ENCODE measurements at regions of chr2 and their contacts with region 1.

Region 1: DNA sequence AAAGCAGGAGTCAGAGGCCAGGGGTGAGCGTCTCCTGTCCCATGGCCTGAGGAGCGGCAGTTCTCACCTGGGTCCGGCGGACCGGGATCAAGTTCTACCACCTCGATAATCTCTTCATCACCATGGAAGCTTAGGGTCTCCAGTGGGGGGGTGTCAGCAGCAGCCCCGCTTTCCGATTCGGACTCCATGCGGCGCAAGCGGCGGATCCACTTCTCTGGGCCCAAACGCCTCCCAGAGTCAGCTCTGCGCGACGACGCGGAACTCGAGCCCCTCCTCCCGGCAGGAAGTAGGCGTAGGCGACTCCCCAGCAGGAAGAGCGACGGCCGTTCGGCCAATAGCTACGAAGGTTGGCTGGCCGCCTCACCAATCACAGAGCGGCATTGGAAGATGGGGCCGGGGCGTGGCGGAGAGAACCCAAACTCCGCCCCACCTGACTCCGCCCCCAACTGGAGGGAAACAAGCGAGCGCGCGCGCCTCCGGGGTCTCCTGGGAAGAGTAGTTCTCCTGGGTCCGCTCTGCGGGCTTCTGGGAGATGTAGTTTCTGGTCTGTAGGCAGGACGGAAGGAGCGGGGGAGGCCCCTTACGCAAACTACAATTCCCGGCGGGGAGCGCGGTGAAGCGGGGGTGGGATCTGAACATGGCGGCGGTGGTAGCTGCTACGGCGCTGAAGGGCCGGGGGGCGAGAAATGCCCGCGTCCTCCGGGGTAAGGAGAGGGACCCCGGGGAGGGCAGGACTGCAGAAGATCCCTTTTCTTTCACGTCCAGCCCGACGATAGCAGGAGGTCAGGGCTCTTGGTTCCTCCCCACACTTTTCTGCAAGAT is at the starts of genes AAMP and PNKD:
- DNase-seq: peak; percentile 100
- ATAC-seq: peak; percentile 87
- H3K4me3 ChIP-seq: peak within 1 kb of the TSS; percentile 78 to 97 (median 96)
- H3K27ac ChIP-seq: peak within 1 kb of the TSS; percentile 80
- H3K4me1 ChIP-seq: peaks cover 58% of the 10 kb centered on the region
- H3K27me3 ChIP-seq: no peaks in the 10 kb centered on the region; a peak in 1 of 5 replicates
- CTCF ChIP-seq: peak; percentile 54
- EP300 ChIP-seq: 0 out of 4 replicates have a peak, but pooled peaks of 1 of the 2 experiments have one; percentile 47
- POLR2A ChIP-seq: peak; percentile 84 to 94
- RAD21 ChIP-seq: peak; percentile 40
- total RNA-seq, gene AAMP: 186 and 241 TPM in 2 replicates
- total RNA-seq, gene PNKD: 50.0 and 55.9 TPM in 2 replicates

Region 2: DNA sequence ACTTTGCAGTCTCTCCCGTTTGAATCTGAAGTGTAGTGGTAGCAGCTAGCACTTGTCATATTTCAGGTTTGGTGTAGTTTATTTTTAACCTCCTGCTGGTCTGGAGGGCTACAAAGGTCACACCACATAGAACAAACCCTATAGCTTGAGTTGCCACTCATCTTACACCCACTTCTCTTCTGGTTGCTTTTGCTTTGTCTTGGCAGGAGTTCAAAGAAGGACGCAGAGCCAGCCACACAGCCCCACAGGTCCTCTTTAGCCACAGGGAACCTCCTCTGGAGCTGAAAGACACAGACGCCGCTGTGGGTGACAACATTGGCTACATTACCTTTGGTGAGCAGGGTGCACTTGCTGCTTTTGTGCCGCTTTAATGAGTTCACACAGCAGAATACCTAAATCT is 24.9 kb before region 1 on chr2:
- CTCF ChIA-PET with region 1: no interaction called
- POLR2A ChIA-PET with region 1: interaction called, 10 read pairs
- in situ Hi-C with region 1: no loop called
- intact Hi-C with region 1: no loop called
- DNase-seq: peak; percentile 54
- ATAC-seq: peak; percentile 87
- H3K4me3 ChIP-seq: peak overlapping the region in 2 of 3 experiments; percentile 2 to 3; a peak in 2 of 6 replicates
- H3K27ac ChIP-seq: peak overlapping the region; percentile 40
- H3K4me1 ChIP-seq: peaks cover 31% of the 10 kb centered on the region
- H3K27me3 ChIP-seq: no peaks in the 10 kb centered on the region
- CTCF ChIP-seq: no peak
- EP300 ChIP-seq: no peak
- POLR2A ChIP-seq: no peak
- RAD21 ChIP-seq: no peak

Region 3: GRCh38 chr2:218292048-218293014 is 22.2 kb after region 1 on chr2 and contains the start of gene TMBIM1:
- CTCF ChIA-PET with region 1: interaction called, 13 read pairs
- POLR2A ChIA-PET with region 1: interaction called, 121 read pairs
- in situ Hi-C with region 1: no loop called
- intact Hi-C with region 1: loop called (anchors 1 kb)
- DNase-seq: peak; percentile 72
- ATAC-seq: peak; percentile 84
- H3K4me3 ChIP-seq: peak within 1 kb of the TSS; percentile 83 to 99 (median 95)
- H3K27ac ChIP-seq: peak within 1 kb of the TSS; percentile 88
- H3K4me1 ChIP-seq: peaks cover 88% of the 10 kb centered on the region
- H3K27me3 ChIP-seq: no peaks in the 10 kb centered on the region; a peak in 1 of 5 replicates
- CTCF ChIP-seq: peak; percentile 72
- EP300 ChIP-seq: peak; percentile 38 to 73; a peak in 3 of 4 replicates
- POLR2A ChIP-seq: peak; percentile 77 to 88
- RAD21 ChIP-seq: peak; percentile 96
- total RNA-seq, gene TMBIM1: 69.7 and 139 TPM in 2 replicates

Region 4: GRCh38 chr2:218345491-218346216 is 75.5 kb after region 1 on chr2:
- CTCF ChIA-PET with region 1: no interaction called
- POLR2A ChIA-PET with region 1: no interaction called
- in situ Hi-C with region 1: no loop called
- intact Hi-C with region 1: no loop called
- DNase-seq: no peak
- ATAC-seq: no peak; the same call in 2 of the 3 replicates
- H3K4me3 ChIP-seq: no peak overlapping the region
- H3K27ac ChIP-seq: no peak overlapping the region
- H3K4me1 ChIP-seq: peaks cover 7% of the 10 kb centered on the region; the same call in 1 of the 2 replicates
- H3K27me3 ChIP-seq: no peaks in the 10 kb centered on the region
- CTCF ChIP-seq: no peak
- EP300 ChIP-seq: no peak
- POLR2A ChIP-seq: no peak
- RAD21 ChIP-seq: no peak

Region 5: GRCh38 chr2:218395797-218396687 is 125.9 kb after region 1 on chr2:
- CTCF ChIA-PET with region 1: interaction called, 8 read pairs
- POLR2A ChIA-PET with region 1: interaction called, 16 read pairs
- in situ Hi-C with region 1: no loop called
- intact Hi-C with region 1: loop called (anchors 1 kb)
- DNase-seq: peak; percentile 94
- ATAC-seq: peak; percentile 25
- H3K4me3 ChIP-seq: peak overlapping the region; percentile 71 to 97 (median 85)
- H3K27ac ChIP-seq: peak overlapping the region; percentile 99
- H3K4me1 ChIP-seq: peaks cover 41% of the 10 kb centered on the region
- H3K27me3 ChIP-seq: no peaks in the 10 kb centered on the region; a peak in 1 of 5 replicates
- CTCF ChIP-seq: peak; percentile 94
- EP300 ChIP-seq: peak; percentile 19 to 78; a peak in 3 of 4 replicates
- POLR2A ChIP-seq: peak in 1 of 2 experiments; percentile 23; a peak in 1 of 4 replicates
- RAD21 ChIP-seq: peak; percentile 94

Region 6: DNA sequence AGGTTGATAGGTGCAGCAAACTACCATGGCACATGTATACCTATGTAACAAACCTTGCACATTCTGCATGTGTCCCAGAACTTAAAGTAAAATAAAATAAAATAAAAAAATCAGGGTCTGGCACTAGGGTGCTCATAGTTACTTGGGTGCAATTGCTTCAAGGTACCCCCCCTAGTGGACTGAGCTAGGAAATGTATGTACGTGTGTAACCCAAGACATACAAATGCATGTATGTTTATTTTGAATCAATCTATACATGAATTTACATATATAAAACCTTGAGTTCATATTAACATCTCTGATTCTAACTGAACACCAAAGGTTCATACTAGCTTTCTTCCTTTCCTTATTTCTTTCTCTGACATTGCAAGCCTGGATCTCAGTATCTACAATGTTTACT is 246.5 kb after region 1 on chr2:
- CTCF ChIA-PET with region 1: interaction called, 3 read pairs
- POLR2A ChIA-PET with region 1: no interaction called
- in situ Hi-C with region 1: no loop called
- intact Hi-C with region 1: loop called (anchors 1 kb)
- DNase-seq: peak; percentile 36
- ATAC-seq: peak; percentile 74
- H3K4me3 ChIP-seq: no peak overlapping the region
- H3K27ac ChIP-seq: no peak overlapping the region
- H3K4me1 ChIP-seq: no peaks in the 10 kb centered on the region
- H3K27me3 ChIP-seq: no peaks in the 10 kb centered on the region
- CTCF ChIP-seq: peak; percentile 49
- EP300 ChIP-seq: no peak
- POLR2A ChIP-seq: no peak
- RAD21 ChIP-seq: no peak